WTC11 (cell line): ENCODE measurements at regions of chr1 and their contacts with region 1.

Region 1: DNA sequence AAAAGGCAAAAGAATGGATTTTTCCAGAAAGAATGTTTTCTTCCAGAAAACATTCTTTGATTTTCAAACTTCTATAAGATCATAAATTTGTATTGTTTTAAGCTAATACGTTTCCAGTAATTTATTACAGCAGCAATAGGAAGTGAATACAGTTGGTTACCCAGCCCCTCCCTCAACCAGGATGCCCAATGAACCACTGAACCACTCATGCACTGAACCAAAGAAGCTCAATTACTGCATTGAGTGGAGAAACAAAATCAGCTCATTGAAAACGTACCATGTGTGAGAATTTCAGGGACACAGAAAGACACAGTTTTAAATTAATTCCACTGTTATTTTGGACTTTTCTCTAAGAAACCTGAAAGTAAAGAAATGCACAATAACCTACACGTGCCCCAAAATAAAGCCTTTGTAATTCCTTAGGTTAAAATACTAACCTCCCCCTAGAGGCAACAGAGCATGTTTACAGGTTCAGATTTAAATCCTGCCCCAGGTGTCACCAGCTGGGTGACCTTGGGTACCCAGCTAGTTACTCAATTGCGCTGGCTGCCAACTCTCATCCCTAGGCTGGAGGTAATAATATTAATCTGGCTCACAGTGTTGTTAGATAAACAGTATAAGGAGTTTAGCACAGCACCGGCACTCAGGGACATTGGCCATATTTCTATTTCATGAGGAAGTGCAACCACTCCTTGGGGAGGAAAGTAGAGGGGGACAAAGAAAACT is 111.7 kb downstream of the NMNAT2 start:
- DNase-seq: no peak
- ATAC-seq: peak; percentile 68
- H3K4me3 Mint-ChIP-seq: no peak overlapping the region
- H3K27ac Mint-ChIP-seq: no peak overlapping the region
- H3K4me1 Mint-ChIP-seq: peaks cover 51% of the 10 kb centered on the region
- H3K27me3 Mint-ChIP-seq: peaks cover 3% of the 10 kb centered on the region
- CTCF ChIP-seq: peak; percentile 32; the same call in 1 of the 2 replicates

Region 2: GRCh38 chr1:183291802-183292514 is 14.5 kb before region 1 on chr1:
- CTCF ChIA-PET with region 1: interaction called, 25 read pairs
- POLR2A ChIA-PET with region 1: no interaction called
- DNase-seq: no peak
- ATAC-seq: peak; percentile 78
- H3K4me3 Mint-ChIP-seq: no peak overlapping the region
- H3K27ac Mint-ChIP-seq: peak overlapping the region; percentile 71
- H3K4me1 Mint-ChIP-seq: peaks cover 29% of the 10 kb centered on the region
- H3K27me3 Mint-ChIP-seq: no peaks in the 10 kb centered on the region; the same call in 1 of the 2 replicates
- CTCF ChIP-seq: no peak

Region 3: DNA sequence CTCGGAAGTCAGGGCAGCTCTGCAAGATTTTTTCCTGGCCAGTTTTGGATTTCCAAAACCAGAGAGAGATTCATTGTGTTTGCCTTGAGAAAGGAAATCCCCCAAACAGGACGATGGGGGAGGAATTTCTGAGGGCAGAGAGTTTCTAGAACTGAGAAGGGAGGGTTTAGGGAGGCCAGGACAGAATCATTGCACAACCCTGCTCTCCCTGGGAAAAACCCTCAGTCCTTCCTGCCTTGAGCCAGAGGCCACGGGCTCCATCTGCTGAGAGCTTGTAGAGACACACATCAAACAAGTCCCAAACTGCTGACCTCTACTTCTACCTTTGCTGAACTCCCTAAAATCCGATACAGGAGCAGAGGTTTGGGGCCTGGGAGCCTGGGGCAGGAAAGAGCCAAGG is 12.0 kb after region 1 on chr1:
- CTCF ChIA-PET with region 1: interaction called, 20 read pairs
- POLR2A ChIA-PET with region 1: interaction called, 3 read pairs
- DNase-seq: peak; percentile 45
- ATAC-seq: peak; percentile 76
- H3K4me3 Mint-ChIP-seq: no peak overlapping the region
- H3K27ac Mint-ChIP-seq: no peak overlapping the region
- H3K4me1 Mint-ChIP-seq: peaks cover 55% of the 10 kb centered on the region
- H3K27me3 Mint-ChIP-seq: peaks cover 8% of the 10 kb centered on the region
- CTCF ChIP-seq: no peak